Left colon (tissue), 2 donors: ENCODE measurements at regions of chr6 and their contacts with region 1.

Region 1: GRCh38 chr6:147506704-147507114 is 1.8 kb upstream of the SAMD5 start:
- DNase-seq: peak; percentile 54 to 88
- ATAC-seq: peak; percentile 62

Region 2: GRCh38 chr6:148164645-148165044 is 657.9 kb after region 1 on chr6:
- intact Hi-C with region 1: loop called in 1 of 2 experiments (anchors 2 kb)
- DNase-seq: no peak
- ATAC-seq: no peak